HepG2 (cell line): ENCODE measurements at regions of chrX and their contacts with region 1.

Region 1: DNA sequence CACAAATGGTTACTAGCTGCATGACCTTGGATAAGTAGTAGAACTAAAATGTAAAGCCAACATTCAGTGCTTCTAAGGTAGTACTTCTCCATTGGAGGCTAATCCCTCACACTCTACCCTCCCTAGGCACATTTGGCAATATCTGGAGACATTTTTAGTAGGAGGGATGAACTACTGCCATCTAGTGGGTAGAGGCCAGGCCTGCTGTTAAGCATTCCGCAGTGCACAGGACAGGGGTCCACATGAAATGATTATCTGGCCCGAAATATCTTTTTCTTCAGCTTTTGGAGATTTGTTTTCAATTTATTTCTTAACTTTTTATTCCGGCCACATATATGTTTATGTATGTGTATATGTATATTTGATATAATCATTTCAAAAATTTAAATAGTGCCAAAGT is 36.0 kb upstream of the SPANXC start:
- DNase-seq: peak; percentile 0
- ATAC-seq: peak; percentile 81
- H3K4me3 ChIP-seq: no peak overlapping the region
- H3K27ac ChIP-seq: no peak overlapping the region
- H3K4me1 ChIP-seq: no peaks in the 10 kb centered on the region
- H3K27me3 ChIP-seq: no peaks in the 10 kb centered on the region
- CTCF ChIP-seq: peak; percentile 56
- EP300 ChIP-seq: no peak
- POLR2A ChIP-seq: no peak
- RAD21 ChIP-seq: no peak

Region 2: GRCh38 chrX:140918407-140919038 is 359.8 kb before region 1 on chrX:
- CTCF ChIA-PET with region 1: interaction called, 8 read pairs
- POLR2A ChIA-PET with region 1: no interaction called
- in situ Hi-C with region 1: no loop called
- intact Hi-C with region 1: loop called (anchors 1 kb)
- DNase-seq: peak; percentile 44
- ATAC-seq: peak; percentile 80
- H3K4me3 ChIP-seq: no peak overlapping the region
- H3K27ac ChIP-seq: no peak overlapping the region
- H3K4me1 ChIP-seq: no peaks in the 10 kb centered on the region
- H3K27me3 ChIP-seq: no peaks in the 10 kb centered on the region
- CTCF ChIP-seq: peak; percentile 60
- EP300 ChIP-seq: no peak
- POLR2A ChIP-seq: no peak
- RAD21 ChIP-seq: no peak